ENCODE measurements at regions of chr5 and their contacts with region 1.

Region 1: GRCh38 chr5:137778772-137779564 is 24.8 kb upstream of the HNRNPA0 start:
- DNase-seq: no peak
- ATAC-seq: no peak
- H3K4me3 Mint-ChIP-seq: no peak overlapping the region
- H3K27ac Mint-ChIP-seq: no peak overlapping the region
- H3K4me1 Mint-ChIP-seq: peaks cover 4% of the 10 kb centered on the region
- H3K27me3 Mint-ChIP-seq: no peaks in the 10 kb centered on the region
- CTCF ChIP-seq: no peak

Region 2: DNA sequence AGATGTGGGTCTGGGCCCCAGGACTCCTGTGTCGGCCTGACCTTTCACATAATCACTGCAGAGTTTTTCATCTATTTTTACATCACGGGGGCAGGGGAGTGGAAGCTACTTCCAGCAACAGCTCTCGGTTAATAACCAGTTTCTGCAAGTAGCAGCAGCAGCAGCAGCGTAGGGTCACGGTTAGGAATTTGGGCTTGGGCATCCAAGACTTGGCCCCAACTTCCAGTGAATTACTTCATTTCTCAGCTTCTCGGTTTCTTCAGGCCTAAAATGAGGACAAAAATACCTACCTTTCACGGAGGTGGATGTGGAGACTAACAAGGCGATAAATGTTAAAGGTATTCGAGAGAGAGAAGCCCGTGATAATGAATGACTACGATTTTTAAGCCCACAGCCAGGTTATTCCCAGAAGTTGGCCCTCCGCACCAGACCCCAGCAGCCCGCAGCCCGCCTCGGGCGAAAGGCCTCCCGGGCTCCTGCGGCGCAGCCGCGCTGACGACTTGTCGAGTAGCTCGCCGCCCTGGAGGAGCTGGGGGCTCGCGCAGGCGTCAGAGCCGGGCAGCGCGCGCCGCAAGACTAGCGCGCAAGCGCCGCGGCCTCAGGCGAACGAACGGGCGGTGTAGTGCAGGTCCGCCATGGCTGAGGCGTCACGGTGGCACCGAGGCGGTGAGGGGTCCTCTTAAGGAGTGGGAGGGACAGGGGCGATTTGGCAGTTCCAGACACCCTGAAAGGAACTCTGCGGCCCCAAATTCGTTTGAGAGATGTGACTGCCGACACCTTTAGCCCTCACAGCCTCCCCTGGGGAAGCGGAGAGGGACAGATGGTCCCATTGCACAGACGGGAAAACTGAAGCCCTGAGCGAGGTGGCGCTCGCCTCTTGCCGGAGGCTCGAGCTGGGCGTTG is 110.1 kb after region 1 on chr5 and contains the start of gene PKD2L2:
- CTCF ChIA-PET with region 1: interaction called, 16 read pairs
- POLR2A ChIA-PET with region 1: interaction called, 8 read pairs
- intact Hi-C with region 1: no loop called
- DNase-seq: peak; percentile 84
- ATAC-seq: peak; percentile 98
- H3K4me3 Mint-ChIP-seq: peak within 1 kb of the TSS; percentile 92
- H3K27ac Mint-ChIP-seq: peak within 1 kb of the TSS; percentile 96
- H3K4me1 Mint-ChIP-seq: peaks cover 32% of the 10 kb centered on the region
- H3K27me3 Mint-ChIP-seq: no peaks in the 10 kb centered on the region
- CTCF ChIP-seq: no peak
- total RNA-seq, gene PKD2L2: not detected in 2 replicates

Region 3: DNA sequence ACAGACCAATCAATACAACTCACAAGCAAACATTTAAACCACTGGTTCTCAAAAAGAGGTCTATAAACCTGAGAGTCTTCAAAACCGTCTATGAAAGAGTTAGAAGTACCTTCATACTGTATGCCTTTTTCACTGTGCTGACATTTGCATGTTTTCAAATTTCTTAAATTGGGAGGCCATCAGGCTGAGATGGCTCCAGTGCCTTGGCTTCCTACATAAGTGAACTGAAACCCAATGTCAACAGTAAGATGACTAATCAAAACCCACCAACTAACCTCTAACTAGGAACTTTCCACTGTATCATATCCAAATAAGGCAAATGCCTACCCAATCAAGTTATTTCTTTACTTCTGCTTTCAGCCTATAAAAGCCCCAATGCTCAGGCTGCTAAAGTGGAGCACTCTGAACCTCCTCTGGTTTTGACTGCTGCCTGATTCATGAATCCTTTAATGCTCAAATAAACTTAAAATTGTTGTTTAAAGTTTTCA is 218.8 kb after region 1 on chr5:
- CTCF ChIA-PET with region 1: interaction called, 10 read pairs
- POLR2A ChIA-PET with region 1: no interaction called
- intact Hi-C with region 1: no loop called
- DNase-seq: no peak
- ATAC-seq: peak; percentile 84
- H3K4me3 Mint-ChIP-seq: peak overlapping the region; percentile 32
- H3K27ac Mint-ChIP-seq: peak overlapping the region; percentile 78
- H3K4me1 Mint-ChIP-seq: peaks cover 45% of the 10 kb centered on the region
- H3K27me3 Mint-ChIP-seq: no peaks in the 10 kb centered on the region
- CTCF ChIP-seq: no peak

Region 4: GRCh38 chr5:138065102-138065501 is 286.1 kb after region 1 on chr5:
- CTCF ChIA-PET with region 1: interaction called, 55 read pairs
- POLR2A ChIA-PET with region 1: no interaction called
- intact Hi-C with region 1: loop called (anchors 1 kb)
- DNase-seq: no peak
- ATAC-seq: no peak
- H3K4me3 Mint-ChIP-seq: no peak overlapping the region
- H3K27ac Mint-ChIP-seq: no peak overlapping the region
- H3K4me1 Mint-ChIP-seq: peaks cover 5% of the 10 kb centered on the region
- H3K27me3 Mint-ChIP-seq: no peaks in the 10 kb centered on the region
- CTCF ChIP-seq: no peak

Region 5: DNA sequence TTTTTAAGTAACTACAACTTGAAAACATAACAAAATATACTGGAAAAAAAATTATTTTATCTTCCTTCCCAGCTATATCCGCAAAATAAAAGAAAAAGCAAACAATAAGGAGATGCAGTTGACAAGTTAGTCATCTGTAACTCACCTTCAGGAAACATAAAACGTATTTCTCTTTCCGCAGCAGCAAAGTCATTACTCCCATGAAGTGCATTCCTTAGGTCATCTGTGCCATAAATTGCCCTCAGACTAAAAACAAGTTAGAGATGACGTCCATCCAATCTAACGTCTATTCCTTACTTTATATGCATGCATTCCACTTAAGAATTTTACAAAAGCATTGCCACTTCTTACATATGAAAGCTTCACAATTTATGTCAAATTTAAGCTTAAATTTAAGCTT is 349.4 kb after region 1 on chr5:
- CTCF ChIA-PET with region 1: interaction called, 40 read pairs
- POLR2A ChIA-PET with region 1: no interaction called
- intact Hi-C with region 1: loop called (anchors 1 kb)
- DNase-seq: no peak
- ATAC-seq: no peak
- H3K4me3 Mint-ChIP-seq: no peak overlapping the region
- H3K27ac Mint-ChIP-seq: no peak overlapping the region
- H3K4me1 Mint-ChIP-seq: peaks cover 3% of the 10 kb centered on the region
- H3K27me3 Mint-ChIP-seq: peaks cover 3% of the 10 kb centered on the region
- CTCF ChIP-seq: no peak

Region 6: DNA sequence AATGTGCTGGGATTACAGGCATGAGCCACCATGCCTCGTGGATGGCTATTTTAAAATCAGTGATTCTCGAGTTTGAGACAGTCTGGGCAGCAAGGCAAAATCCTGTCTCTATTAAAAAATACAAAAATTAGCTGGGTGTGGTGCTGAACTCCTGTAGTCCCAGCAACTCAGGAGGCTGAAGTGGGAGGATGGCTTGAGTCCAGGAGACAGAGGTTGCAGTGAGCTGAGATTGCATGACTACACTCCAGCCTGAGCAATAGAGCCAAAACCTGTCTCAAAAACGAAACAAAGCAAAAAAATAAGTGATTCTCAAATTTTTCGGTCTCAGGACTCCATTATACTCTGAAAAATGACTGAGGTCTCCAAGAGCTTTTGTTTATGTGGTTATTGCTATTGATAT is 844.1 kb after region 1 on chr5:
- CTCF ChIA-PET with region 1: no interaction called
- POLR2A ChIA-PET with region 1: no interaction called
- intact Hi-C with region 1: no loop called
- DNase-seq: no peak
- ATAC-seq: no peak
- H3K4me3 Mint-ChIP-seq: no peak overlapping the region
- H3K27ac Mint-ChIP-seq: no peak overlapping the region
- H3K4me1 Mint-ChIP-seq: no peaks in the 10 kb centered on the region
- H3K27me3 Mint-ChIP-seq: peaks cover 11% of the 10 kb centered on the region
- CTCF ChIP-seq: no peak